Activated B cell treated with CpG ODN at 0.5 μM for 24 hours (primary cell): ENCODE measurements at regions of chr11 and their contacts with region 1.

Region 1: DNA sequence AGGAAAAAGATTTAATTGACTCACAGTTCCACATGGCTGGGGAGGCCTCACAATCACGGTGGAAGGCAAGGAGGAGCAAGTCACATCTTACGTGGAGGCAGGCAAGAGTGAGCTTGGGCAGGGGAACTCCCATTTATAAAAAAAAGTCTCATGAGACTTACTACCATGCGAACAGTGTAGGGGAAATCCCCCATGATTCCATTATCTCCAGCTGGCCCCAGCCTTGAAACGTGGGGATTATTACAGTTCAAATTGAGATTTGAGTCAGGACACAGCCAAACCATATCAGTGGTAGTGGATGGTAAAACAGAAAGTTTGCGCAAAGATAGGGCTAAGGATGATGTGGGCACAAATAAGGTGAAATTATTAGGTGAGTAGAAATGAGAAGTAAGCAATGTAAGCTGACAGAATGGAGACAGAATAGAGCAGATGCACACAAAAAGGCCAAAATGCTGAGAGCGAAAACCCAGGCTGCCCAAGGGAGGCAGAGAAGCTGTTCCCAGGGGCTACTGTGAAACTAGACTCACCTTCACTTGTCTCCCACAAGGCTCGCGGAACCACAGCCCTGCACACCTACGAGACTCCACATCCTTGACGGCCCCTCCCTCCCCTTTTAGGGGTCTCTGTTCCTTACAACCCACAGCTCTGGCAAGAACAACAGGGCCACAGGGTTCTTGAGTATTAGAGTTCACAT is 377.6 kb downstream of the CADM1 start:
- DNase-seq: no peak
- ATAC-seq: peak; percentile 84
- H3K4me3 Mint-ChIP-seq: no peak overlapping the region
- H3K27ac Mint-ChIP-seq: no peak overlapping the region
- H3K4me1 Mint-ChIP-seq: peaks cover 11% of the 10 kb centered on the region
- H3K27me3 Mint-ChIP-seq: no peaks in the 10 kb centered on the region
- CTCF ChIP-seq: no peak

Region 2: DNA sequence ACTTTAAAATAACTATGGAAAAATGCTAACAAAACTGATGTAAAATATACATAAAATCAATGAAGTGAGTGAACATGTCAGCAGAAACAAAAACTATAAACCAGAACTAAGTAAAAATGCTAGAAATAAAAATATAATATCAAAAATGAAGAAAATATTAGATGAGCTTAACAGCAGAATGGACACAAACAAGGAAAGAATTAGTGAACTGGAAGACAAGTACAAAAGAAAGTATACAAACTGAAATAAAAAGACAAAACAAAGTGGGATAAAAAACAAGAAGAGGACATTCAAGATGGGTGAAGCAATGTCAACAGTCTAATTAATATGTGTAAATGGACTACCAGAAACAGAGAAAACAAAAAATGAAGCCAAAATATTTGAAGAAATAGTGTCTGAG is 109.1 kb before region 1 on chr11:
- CTCF ChIA-PET with region 1: no interaction called
- POLR2A ChIA-PET with region 1: no interaction called
- intact Hi-C with region 1: no loop called
- DNase-seq: no peak
- ATAC-seq: no peak
- H3K4me3 Mint-ChIP-seq: no peak overlapping the region
- H3K27ac Mint-ChIP-seq: no peak overlapping the region
- H3K4me1 Mint-ChIP-seq: no peaks in the 10 kb centered on the region
- H3K27me3 Mint-ChIP-seq: no peaks in the 10 kb centered on the region
- CTCF ChIP-seq: no peak

Region 3: GRCh38 chr11:115185507-115185906 is 58.8 kb after region 1 on chr11:
- CTCF ChIA-PET with region 1: no interaction called
- POLR2A ChIA-PET with region 1: no interaction called
- intact Hi-C with region 1: no loop called
- DNase-seq: no peak
- ATAC-seq: no peak
- H3K4me3 Mint-ChIP-seq: no peak overlapping the region
- H3K27ac Mint-ChIP-seq: no peak overlapping the region
- H3K4me1 Mint-ChIP-seq: no peaks in the 10 kb centered on the region
- H3K27me3 Mint-ChIP-seq: no peaks in the 10 kb centered on the region
- CTCF ChIP-seq: no peak

Region 4: DNA sequence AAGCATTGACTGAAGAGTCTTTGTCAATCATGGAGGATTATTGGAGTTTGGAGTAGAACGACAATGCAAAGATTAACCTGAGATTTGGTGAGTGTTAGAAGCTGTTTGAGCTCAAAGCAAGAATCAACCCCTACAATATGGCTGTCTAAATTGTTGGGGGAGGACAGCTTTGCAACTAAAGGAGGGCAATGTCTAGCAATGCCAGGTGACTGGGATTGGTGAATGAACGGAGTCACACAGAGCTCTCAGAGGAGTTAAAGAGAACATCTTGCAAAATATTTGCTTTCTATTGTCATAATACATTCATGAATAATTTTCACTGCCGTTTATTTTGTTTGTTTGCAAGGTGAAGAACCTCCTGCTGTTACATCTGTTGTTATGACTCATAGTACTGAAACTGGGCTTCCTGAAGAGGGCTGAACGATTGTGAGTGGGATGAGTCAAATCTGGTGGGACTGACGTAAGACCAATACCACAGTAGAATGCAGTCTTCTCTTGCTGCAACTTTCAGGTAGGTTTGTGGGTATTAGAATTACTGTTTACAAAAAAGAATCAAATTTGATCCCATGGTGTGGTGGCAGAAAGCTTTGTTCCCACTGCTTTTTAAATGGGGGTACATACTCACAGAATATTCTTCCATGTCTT is 95.7 kb after region 1 on chr11:
- CTCF ChIA-PET with region 1: no interaction called
- POLR2A ChIA-PET with region 1: no interaction called
- intact Hi-C with region 1: loop called (anchors 1 kb)
- DNase-seq: no peak
- ATAC-seq: peak; percentile 89
- H3K4me3 Mint-ChIP-seq: no peak overlapping the region
- H3K27ac Mint-ChIP-seq: peak overlapping the region; percentile 61
- H3K4me1 Mint-ChIP-seq: peaks cover 17% of the 10 kb centered on the region
- H3K27me3 Mint-ChIP-seq: no peaks in the 10 kb centered on the region
- CTCF ChIP-seq: no peak

Region 5: GRCh38 chr11:115924744-115925567 is 798.3 kb after region 1 on chr11:
- CTCF ChIA-PET with region 1: no interaction called
- POLR2A ChIA-PET with region 1: no interaction called
- intact Hi-C with region 1: loop called (anchors 5 kb)
- DNase-seq: no peak
- ATAC-seq: peak; percentile 91
- H3K4me3 Mint-ChIP-seq: no peak overlapping the region
- H3K27ac Mint-ChIP-seq: peak overlapping the region; percentile 46
- H3K4me1 Mint-ChIP-seq: peaks cover 46% of the 10 kb centered on the region
- H3K27me3 Mint-ChIP-seq: no peaks in the 10 kb centered on the region
- CTCF ChIP-seq: no peak